CD4-positive, alpha-beta memory T cell (primary cell): ENCODE measurements at regions of chr5 and their contacts with region 1.

Region 1: GRCh38 chr5:55711968-55712859 is at the start of gene SLC38A9:
- DNase-seq: peak; percentile 86 to 94 (median 89)
- H3K4me3 ChIP-seq: peak within 1 kb of the TSS; percentile 83 to 89
- H3K4me3 Mint-ChIP-seq: peak within 1 kb of the TSS; percentile 99 to 100 (median 99)
- H3K27ac ChIP-seq: peak within 1 kb of the TSS; percentile 78
- H3K27ac Mint-ChIP-seq: peak within 1 kb of the TSS; percentile 89 to 97 (median 96)
- H3K4me1 ChIP-seq: peaks cover 14% of the 10 kb centered on the region
- H3K4me1 Mint-ChIP-seq: peaks cover 15 to 33% (median 21%) of the 10 kb centered on the region in 4 donors
- H3K27me3 ChIP-seq: no peaks in the 10 kb centered on the region
- H3K27me3 Mint-ChIP-seq: no peaks in the 10 kb centered on the region
- total RNA-seq, gene SLC38A9: 28.0 to 28.2 TPM

Region 2: GRCh38 chr5:55534436-55535198 is 177.6 kb before region 1 on chr5 and contains the start of gene PLPP1:
- CTCF ChIA-PET with region 1: no interaction called
- POLR2A ChIA-PET with region 1: no interaction called
- intact Hi-C with region 1: loop called (anchors 2 kb)
- DNase-seq: peak; percentile 83 to 91 (median 86)
- H3K4me3 ChIP-seq: peak within 1 kb of the TSS; percentile 44 to 80
- H3K4me3 Mint-ChIP-seq: peak within 1 kb of the TSS; percentile 92 to 97 (median 94)
- H3K27ac ChIP-seq: peak within 1 kb of the TSS; percentile 73
- H3K27ac Mint-ChIP-seq: peak within 1 kb of the TSS; percentile 90 to 96 (median 94)
- H3K4me1 ChIP-seq: peaks cover 29% of the 10 kb centered on the region
- H3K4me1 Mint-ChIP-seq: peaks cover 21 to 26% (median 23%) of the 10 kb centered on the region in 4 donors
- H3K27me3 ChIP-seq: no peaks in the 10 kb centered on the region
- H3K27me3 Mint-ChIP-seq: no peaks in the 10 kb centered on the region
- total RNA-seq, gene PLPP1: 6.1 to 6.8 TPM